Transverse colon (tissue), 4 donors: ENCODE measurements at regions of chr6 and their contacts with region 1.

Region 1: GRCh38 chr6:24064082-24064481 is 61.9 kb upstream of the NRSN1 start:
- DNase-seq: peak; percentile 10
- H3K4me3 ChIP-seq: no peak overlapping the region
- H3K27ac ChIP-seq: no peak overlapping the region
- H3K4me1 ChIP-seq: no peaks in the 10 kb centered on the region
- H3K27me3 ChIP-seq: no peaks in the 10 kb centered on the region
- CTCF ChIP-seq: peak in 4 of 5 experiments; percentile 32 to 52 (median 39)
- EP300 ChIP-seq: no peak
- POLR2A ChIP-seq: no peak

Region 2: GRCh38 chr6:23797041-23797440 is 267.0 kb before region 1 on chr6:
- in situ Hi-C with region 1: no loop called
- intact Hi-C with region 1: no loop called
- DNase-seq: no peak
- H3K4me3 ChIP-seq: no peak overlapping the region
- H3K27ac ChIP-seq: no peak overlapping the region
- H3K4me1 ChIP-seq: no peaks in the 10 kb centered on the region
- H3K27me3 ChIP-seq: no peaks in the 10 kb centered on the region
- CTCF ChIP-seq: no peak
- EP300 ChIP-seq: no peak
- POLR2A ChIP-seq: no peak

Region 3: GRCh38 chr6:24205020-24205492 is 141.0 kb after region 1 on chr6:
- in situ Hi-C with region 1: loop called in 1 of 4 experiments (anchors 10 kb)
- intact Hi-C with region 1: no loop called
- DNase-seq: no peak
- H3K4me3 ChIP-seq: no peak overlapping the region
- H3K27ac ChIP-seq: no peak overlapping the region
- H3K4me1 ChIP-seq: no peaks in the 10 kb centered on the region
- H3K27me3 ChIP-seq: no peaks in the 10 kb centered on the region
- CTCF ChIP-seq: peak; percentile 56 to 64 (median 62)
- EP300 ChIP-seq: no peak
- POLR2A ChIP-seq: no peak

Region 4: GRCh38 chr6:24274441-24275083 is 210.5 kb after region 1 on chr6:
- in situ Hi-C with region 1: loop called in 1 of 4 experiments (anchors 10 kb)
- intact Hi-C with region 1: no loop called
- DNase-seq: no peak
- H3K4me3 ChIP-seq: no peak overlapping the region
- H3K27ac ChIP-seq: no peak overlapping the region
- H3K4me1 ChIP-seq: no peaks in the 10 kb centered on the region
- H3K27me3 ChIP-seq: no peaks in the 10 kb centered on the region
- CTCF ChIP-seq: peak; percentile 32 to 54 (median 45)
- EP300 ChIP-seq: no peak
- POLR2A ChIP-seq: no peak